HepG2 (cell line): ENCODE measurements at regions of chr19 and their contacts with region 1.

Region 1: DNA sequence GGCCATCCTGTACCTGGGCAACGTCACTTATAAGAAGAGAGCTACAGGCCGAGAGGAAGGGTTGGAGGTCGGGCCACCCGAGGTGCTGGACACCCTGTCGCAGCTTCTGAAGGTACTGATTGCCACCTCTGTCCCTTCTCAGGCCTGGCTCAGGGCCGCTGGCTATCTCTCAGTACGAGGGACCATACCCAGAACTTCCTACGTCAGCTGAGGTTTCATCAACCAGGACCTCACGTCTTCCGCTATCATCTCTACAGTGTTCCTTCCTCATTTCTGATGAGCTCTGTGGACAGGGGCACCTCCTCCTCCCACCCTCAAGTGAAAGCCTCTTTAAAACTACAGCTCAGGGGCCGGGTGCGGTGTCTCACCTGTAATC is 58.2 kb upstream of the USE1 start:
- DNase-seq: no peak
- ATAC-seq: no peak
- H3K4me3 ChIP-seq: no peak overlapping the region
- H3K27ac ChIP-seq: no peak overlapping the region
- H3K4me1 ChIP-seq: peaks cover 13% of the 10 kb centered on the region
- H3K27me3 ChIP-seq: no peaks in the 10 kb centered on the region
- CTCF ChIP-seq: no peak
- EP300 ChIP-seq: no peak
- POLR2A ChIP-seq: no peak
- RAD21 ChIP-seq: no peak

Region 2: DNA sequence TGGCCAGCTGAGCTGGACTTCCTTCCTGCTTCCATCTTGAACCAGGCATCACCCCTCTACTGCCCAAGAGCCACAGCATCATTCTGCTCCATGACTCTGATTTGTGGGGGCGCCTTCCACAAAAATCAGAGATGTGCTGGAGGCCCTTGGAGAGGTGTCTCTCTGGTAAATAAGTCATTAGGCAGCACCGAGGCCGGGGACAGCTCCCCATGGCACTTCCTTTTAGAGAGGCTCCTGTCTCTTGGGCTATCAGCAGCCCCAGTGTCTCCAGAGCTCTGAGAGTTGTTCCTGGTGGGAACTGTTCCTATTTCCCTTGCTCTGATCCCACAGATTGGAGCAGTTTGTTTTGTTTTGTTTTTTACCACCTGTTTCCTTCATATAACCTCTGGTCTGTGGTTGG is 417.4 kb before region 1 on chr19:
- CTCF ChIA-PET with region 1: no interaction called
- POLR2A ChIA-PET with region 1: no interaction called
- in situ Hi-C with region 1: no loop called
- intact Hi-C with region 1: no loop called
- DNase-seq: no peak
- ATAC-seq: no peak
- H3K4me3 ChIP-seq: no peak overlapping the region
- H3K27ac ChIP-seq: no peak overlapping the region
- H3K4me1 ChIP-seq: 0 out of 2 replicates have a peak, but pooled peaks cover 7% of the 10 kb centered on the region
- H3K27me3 ChIP-seq: no peaks in the 10 kb centered on the region
- CTCF ChIP-seq: no peak
- EP300 ChIP-seq: no peak
- POLR2A ChIP-seq: no peak
- RAD21 ChIP-seq: no peak

Region 3: GRCh38 chr19:16944626-16945363 is 212.1 kb before region 1 on chr19:
- CTCF ChIA-PET with region 1: no interaction called
- POLR2A ChIA-PET with region 1: no interaction called
- in situ Hi-C with region 1: no loop called
- intact Hi-C with region 1: loop called (anchors 5 kb)
- DNase-seq: no peak
- ATAC-seq: peak; percentile 24; the same call in 1 of the 3 replicates
- H3K4me3 ChIP-seq: no peak overlapping the region
- H3K27ac ChIP-seq: no peak overlapping the region
- H3K4me1 ChIP-seq: no peaks in the 10 kb centered on the region
- H3K27me3 ChIP-seq: peaks cover 0 to 2% of the 10 kb centered on the region in 2 experiments; a peak in 2 of 5 replicates
- CTCF ChIP-seq: no peak
- EP300 ChIP-seq: no peak
- POLR2A ChIP-seq: no peak
- RAD21 ChIP-seq: no peak